Mammary epithelial cell (primary cell): ENCODE measurements at regions of chr13 and their contacts with region 1.

Region 1: GRCh38 chr13:64723724-64724123 is 2506.4 kb downstream of the PCDH9 start:
- DNase-seq: peak; percentile 90
- H3K4me3 ChIP-seq: no peak overlapping the region
- H3K27ac ChIP-seq: peak overlapping the region; percentile 81
- H3K4me1 ChIP-seq: peaks cover 8% of the 10 kb centered on the region
- H3K27me3 ChIP-seq: no peaks in the 10 kb centered on the region
- CTCF ChIP-seq: no peak

Region 2: DNA sequence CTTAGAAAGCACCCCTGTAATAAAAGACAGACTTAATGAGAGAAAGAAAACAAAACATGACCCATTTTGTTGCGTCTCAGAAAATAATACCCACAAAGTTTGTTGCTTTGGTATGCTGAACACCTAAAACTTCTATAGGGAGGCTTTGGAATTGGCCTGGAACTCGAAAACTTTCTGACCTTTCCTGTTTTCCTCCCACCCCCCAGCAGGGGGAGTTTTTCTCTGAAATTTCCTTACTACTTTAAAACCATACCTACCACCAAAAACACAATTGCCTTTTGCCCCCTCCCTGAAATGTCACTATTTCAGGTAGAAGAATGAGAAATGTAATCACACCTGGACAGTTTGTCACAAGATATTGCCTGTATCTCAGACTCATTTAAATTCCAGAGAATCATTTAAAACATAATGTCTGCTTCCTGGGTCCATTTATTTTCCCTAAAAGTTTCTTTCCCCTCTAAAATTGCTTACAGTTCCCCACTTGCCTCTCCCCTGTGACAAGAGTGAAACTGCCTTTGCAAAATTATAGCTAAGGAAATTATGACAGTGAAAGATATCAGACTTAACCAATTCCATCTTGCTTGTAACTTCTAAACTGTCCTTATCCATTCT is 193.7 kb before region 1 on chr13:
- CTCF ChIA-PET with region 1: no interaction called
- dilution Hi-C with region 1: no loop called
- in situ Hi-C with region 1: no loop called
- intact Hi-C with region 1: loop called (anchors 10 kb)
- DNase-seq: no peak
- H3K4me3 ChIP-seq: no peak overlapping the region
- H3K27ac ChIP-seq: no peak overlapping the region
- H3K4me1 ChIP-seq: peaks cover 4% of the 10 kb centered on the region
- H3K27me3 ChIP-seq: no peaks in the 10 kb centered on the region
- CTCF ChIP-seq: peak; percentile 54 to 60

Region 3: DNA sequence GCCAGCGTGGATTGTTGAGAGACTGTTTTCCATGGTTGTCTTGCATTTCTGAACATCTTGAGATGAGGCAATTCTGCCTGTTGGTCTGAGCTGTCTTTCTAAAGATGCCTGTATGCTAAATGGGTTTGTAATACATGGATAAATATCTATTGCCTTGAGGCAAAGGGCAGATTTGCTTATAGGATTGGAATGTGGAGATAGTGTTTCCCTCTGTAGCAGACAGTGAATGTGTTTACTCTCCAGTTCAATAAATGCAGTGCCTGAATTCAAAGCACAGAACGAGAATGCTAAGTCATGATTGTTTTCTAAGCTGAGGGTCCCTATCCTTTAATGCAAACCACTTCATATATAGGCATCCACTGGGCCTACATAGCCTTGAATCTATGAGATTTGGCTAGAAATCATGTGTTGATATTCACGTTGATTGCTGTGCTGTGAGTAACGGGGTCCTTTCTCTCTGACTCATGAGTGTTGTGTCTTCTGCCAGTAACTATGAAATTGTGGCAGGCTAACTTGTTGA is 48.4 kb before region 1 on chr13:
- CTCF ChIA-PET with region 1: no interaction called
- dilution Hi-C with region 1: no loop called
- in situ Hi-C with region 1: no loop called
- intact Hi-C with region 1: loop called (anchors 10 kb)
- DNase-seq: peak; percentile 76
- H3K4me3 ChIP-seq: no peak overlapping the region
- H3K27ac ChIP-seq: peak overlapping the region; percentile 59
- H3K4me1 ChIP-seq: peaks cover 27% of the 10 kb centered on the region
- H3K27me3 ChIP-seq: no peaks in the 10 kb centered on the region
- CTCF ChIP-seq: no peak